Tibial artery (tissue), 4 donors: ENCODE measurements at regions of chr11 and their contacts with region 1.

Region 1: GRCh38 chr11:78251083-78251775 is 62.5 kb downstream of the USP35 start:
- DNase-seq: no peak
- H3K4me3 ChIP-seq: no peak overlapping the region
- H3K27ac ChIP-seq: peak overlapping the region; percentile 5 to 50
- H3K4me1 ChIP-seq: peaks cover 0 to 40% (median 10%) of the 10 kb centered on the region in 4 donors
- H3K27me3 ChIP-seq: no peaks in the 10 kb centered on the region
- CTCF ChIP-seq: no peak

Region 2: DNA sequence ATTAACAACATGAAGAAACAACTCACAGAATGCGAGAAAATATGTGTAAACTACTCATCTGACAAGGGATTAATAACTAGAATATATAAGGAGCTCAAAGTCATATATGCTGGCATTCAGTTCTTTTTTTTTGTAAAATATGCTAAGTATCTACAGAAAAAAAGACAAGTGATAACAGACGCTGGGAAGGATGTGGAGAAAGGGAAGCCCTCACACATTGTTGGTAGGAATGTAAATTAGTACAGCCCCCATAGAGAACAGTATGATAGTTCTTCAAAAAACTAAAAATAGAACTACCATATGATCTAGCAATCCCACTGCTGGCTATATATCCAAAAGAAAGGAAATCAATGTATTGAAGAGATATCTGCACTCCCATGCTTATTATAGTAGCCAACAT is 152.6 kb after region 1 on chr11:
- intact Hi-C with region 1: loop called (anchors 5 kb)
- DNase-seq: no peak
- H3K4me3 ChIP-seq: no peak overlapping the region
- H3K27ac ChIP-seq: no peak overlapping the region
- H3K4me1 ChIP-seq: peaks cover 0 to 25% (median 8%) of the 10 kb centered on the region in 4 donors
- H3K27me3 ChIP-seq: no peaks in the 10 kb centered on the region
- CTCF ChIP-seq: no peak